Sigmoid colon (tissue), 7 donors: ENCODE measurements at regions of chr1 and their contacts with region 1.

Region 1: GRCh38 chr1:243501002-243501401 is 245.2 kb downstream of the SDCCAG8 start:
- DNase-seq: no peak
- H3K4me3 ChIP-seq: no peak overlapping the region
- H3K27ac ChIP-seq: no peak overlapping the region
- H3K4me1 ChIP-seq: peaks cover 0 to 10% (median 7%) of the 10 kb centered on the region in 4 donors
- H3K27me3 ChIP-seq: no peaks in the 10 kb centered on the region
- CTCF ChIP-seq: no peak
- EP300 ChIP-seq: no peak
- POLR2A ChIP-seq: no peak

Region 2: GRCh38 chr1:243568793-243569192 is 67.8 kb after region 1 on chr1:
- intact Hi-C with region 1: loop called (anchors 5 kb)
- DNase-seq: no peak
- H3K4me3 ChIP-seq: no peak overlapping the region
- H3K27ac ChIP-seq: peak overlapping the region in 3 of 4 donors; percentile 47 to 54 (median 48)
- H3K4me1 ChIP-seq: peaks cover 0 to 50% (median 29%) of the 10 kb centered on the region in 4 donors
- H3K27me3 ChIP-seq: no peaks in the 10 kb centered on the region
- CTCF ChIP-seq: no peak
- EP300 ChIP-seq: no peak
- POLR2A ChIP-seq: no peak